BJ (cell line): ENCODE measurements at regions of chr3 and their contacts with region 1.

Region 1: DNA sequence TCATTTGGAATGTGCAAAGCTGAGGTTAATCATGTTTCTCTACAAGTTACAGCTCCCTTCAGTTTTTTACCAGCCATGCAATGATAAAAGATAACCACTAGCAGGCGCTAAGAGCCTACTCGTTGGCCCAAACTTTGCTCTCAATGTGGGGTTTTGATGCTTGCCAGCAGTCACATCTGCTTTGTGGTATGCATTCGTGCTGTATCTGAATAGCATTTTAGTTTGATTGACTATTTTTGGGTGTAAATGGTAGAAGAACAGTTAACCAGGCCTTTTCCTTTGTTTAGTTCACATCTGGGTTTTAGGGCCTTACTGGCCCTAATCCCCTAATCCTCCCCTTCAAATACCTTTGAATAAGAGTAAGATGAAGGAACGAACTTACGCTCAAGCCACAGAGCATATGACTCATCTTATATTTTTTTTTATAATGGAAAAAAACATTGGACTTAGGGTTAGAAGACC is 4.4 kb upstream of the CLDN11 start:
- DNase-seq: peak; percentile 95
- H3K4me3 ChIP-seq: no peak overlapping the region
- H3K27me3 ChIP-seq: no peaks in the 10 kb centered on the region
- CTCF ChIP-seq: peak; percentile 97

Region 2: GRCh38 chr3:170307671-170308403 is 106.4 kb before region 1 on chr3:
- CTCF ChIA-PET with region 1: interaction called, 24 read pairs
- POLR2A ChIA-PET with region 1: no interaction called
- DNase-seq: no peak
- H3K4me3 ChIP-seq: no peak overlapping the region
- H3K27me3 ChIP-seq: no peaks in the 10 kb centered on the region
- CTCF ChIP-seq: no peak

Region 3: DNA sequence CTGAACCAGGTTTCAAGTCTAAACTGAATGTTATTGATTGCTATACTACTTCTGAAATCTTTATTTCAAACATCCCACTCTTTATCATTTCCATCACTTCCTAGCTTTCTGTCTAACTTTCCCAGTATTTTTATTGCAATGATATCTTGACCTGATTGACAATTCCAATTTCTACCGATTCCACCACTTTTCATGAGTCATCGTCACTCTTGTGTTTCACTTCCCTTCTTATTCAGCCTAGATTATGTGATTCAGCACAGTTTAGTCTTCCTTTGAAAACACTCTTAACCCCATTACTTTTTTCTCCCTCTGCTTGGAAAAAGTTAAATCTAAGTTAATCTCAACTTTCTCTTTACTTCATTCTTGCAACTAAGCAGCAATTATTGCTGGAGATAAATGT is 109.0 kb after region 1 on chr3:
- CTCF ChIA-PET with region 1: no interaction called
- POLR2A ChIA-PET with region 1: no interaction called
- DNase-seq: no peak
- H3K4me3 ChIP-seq: no peak overlapping the region
- H3K27me3 ChIP-seq: peaks cover 1% of the 10 kb centered on the region; the same call in 1 of the 2 replicates
- CTCF ChIP-seq: no peak

Region 4: GRCh38 chr3:170622369-170623159 is 208.3 kb after region 1 on chr3:
- CTCF ChIA-PET with region 1: interaction called, 11 read pairs
- POLR2A ChIA-PET with region 1: no interaction called
- DNase-seq: peak; percentile 95
- H3K4me3 ChIP-seq: no peak overlapping the region
- H3K27me3 ChIP-seq: no peaks in the 10 kb centered on the region
- CTCF ChIP-seq: no peak

Region 5: GRCh38 chr3:170802164-170803151 is 388.2 kb after region 1 on chr3:
- CTCF ChIA-PET with region 1: interaction called, 10 read pairs
- POLR2A ChIA-PET with region 1: no interaction called
- DNase-seq: peak; percentile 97
- H3K4me3 ChIP-seq: no peak overlapping the region
- H3K27me3 ChIP-seq: no peaks in the 10 kb centered on the region
- CTCF ChIP-seq: no peak